Heart left ventricle (tissue), 16 donors: ENCODE measurements at regions of chr2 and their contacts with region 1.

Region 1: GRCh38 chr2:104872866-104873688 is 19.2 kb downstream of the POU3F3 start:
- DNase-seq: peak in 4 of 5 donors; percentile 40 to 49 (median 47)
- ATAC-seq: peak in 3 of 4 donors; percentile 79 to 87 (median 83)
- H3K4me3 ChIP-seq: peak overlapping the region; percentile 12 to 70 (median 54)
- H3K27ac ChIP-seq: no peak overlapping the region
- H3K4me1 ChIP-seq: peaks cover 0 to 22% (median 8%) of the 10 kb centered on the region in 12 donors
- H3K27me3 ChIP-seq: peaks cover 30 to 95% (median 48%) of the 10 kb centered on the region in 9 donors
- CTCF ChIP-seq: peak; percentile 12 to 69 (median 48)
- POLR2A ChIP-seq: no peak

Region 2: GRCh38 chr2:103161456-103162289 is 1711.4 kb before region 1 on chr2:
- intact Hi-C with region 1: loop called in 2 of 10 experiments (anchors 5 to 10 kb)
- DNase-seq: no peak
- ATAC-seq: peak in 3 of 4 donors; percentile 22 to 61 (median 57)
- H3K4me3 ChIP-seq: no peak overlapping the region
- H3K27ac ChIP-seq: no peak overlapping the region
- H3K4me1 ChIP-seq: no peaks in the 10 kb centered on the region
- H3K27me3 ChIP-seq: peaks cover 0 to 11% (median 0%) of the 10 kb centered on the region in 9 donors
- CTCF ChIP-seq: peak; percentile 42 to 72 (median 58)
- POLR2A ChIP-seq: no peak

Region 3: DNA sequence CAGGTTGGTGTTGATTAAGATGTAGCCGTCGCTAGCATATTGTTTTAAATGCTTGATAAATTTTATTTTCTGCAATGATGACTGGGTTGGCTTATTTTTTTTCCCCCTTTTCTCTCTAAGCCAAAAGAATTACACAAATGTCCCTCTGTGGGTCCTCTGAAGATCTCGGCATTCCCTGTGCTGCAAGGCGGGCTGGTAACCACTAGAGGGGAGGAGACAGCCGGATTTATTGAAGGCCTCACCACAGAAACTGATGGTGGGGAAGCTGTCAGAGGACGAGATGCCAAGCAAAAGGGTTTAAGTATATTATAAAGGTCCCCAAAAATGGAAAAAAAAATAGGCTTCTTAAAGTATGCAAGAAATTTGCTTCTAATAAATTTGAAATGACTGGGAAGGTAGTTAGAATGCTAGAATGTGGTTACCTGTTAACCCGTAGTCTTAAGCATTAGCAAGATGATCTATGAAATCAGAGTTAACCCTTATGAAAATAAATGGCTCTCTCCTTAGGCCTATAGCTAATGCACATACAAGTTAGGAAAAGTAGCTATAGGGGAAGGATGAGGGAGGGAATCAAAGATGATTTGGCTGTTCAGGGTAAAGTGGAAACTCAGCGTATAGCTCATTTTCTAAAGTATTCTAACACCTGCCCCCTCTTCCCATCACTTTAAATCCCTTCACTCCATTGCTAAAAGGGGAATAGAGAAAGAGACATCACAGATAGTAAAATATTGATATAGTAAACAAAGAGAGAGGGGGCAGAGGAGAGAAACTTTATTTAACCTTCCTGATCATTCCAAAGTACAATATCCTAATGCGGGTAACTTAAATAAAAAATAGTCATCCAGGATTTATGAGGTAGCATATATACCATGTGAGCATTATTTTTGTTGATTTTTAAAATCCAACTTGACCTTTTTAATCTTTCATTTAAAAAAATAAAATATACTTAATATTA is 913.6 kb before region 1 on chr2:
- intact Hi-C with region 1: loop called in 1 of 10 experiments (anchors 10 kb)
- DNase-seq: peak in 2 of 5 donors; percentile 7 to 19
- ATAC-seq: peak in 1 of 4 donors; percentile 44
- H3K4me3 ChIP-seq: no peak overlapping the region
- H3K27ac ChIP-seq: no peak overlapping the region
- H3K4me1 ChIP-seq: no peaks in the 10 kb centered on the region
- H3K27me3 ChIP-seq: no peaks in the 10 kb centered on the region
- CTCF ChIP-seq: peak in 11 of 12 donors; percentile 20 to 59 (median 40)
- POLR2A ChIP-seq: no peak

Region 4: GRCh38 chr2:104033399-104033798 is 839.7 kb before region 1 on chr2:
- intact Hi-C with region 1: loop called in 1 of 10 experiments (anchors 10 kb)
- DNase-seq: no peak
- ATAC-seq: no peak
- H3K4me3 ChIP-seq: no peak overlapping the region
- H3K27ac ChIP-seq: no peak overlapping the region
- H3K4me1 ChIP-seq: no peaks in the 10 kb centered on the region
- H3K27me3 ChIP-seq: peaks cover 0 to 3% (median 0%) of the 10 kb centered on the region in 9 donors
- CTCF ChIP-seq: peak in 5 of 12 donors; percentile 22 to 44 (median 26)
- POLR2A ChIP-seq: no peak

Region 5: GRCh38 chr2:104254020-104254419 is 619.1 kb before region 1 on chr2:
- intact Hi-C with region 1: loop called in 1 of 10 experiments (anchors 10 kb)
- DNase-seq: no peak
- ATAC-seq: no peak
- H3K4me3 ChIP-seq: no peak overlapping the region
- H3K27ac ChIP-seq: no peak overlapping the region
- H3K4me1 ChIP-seq: no peaks in the 10 kb centered on the region
- H3K27me3 ChIP-seq: no peaks in the 10 kb centered on the region
- CTCF ChIP-seq: no peak
- POLR2A ChIP-seq: no peak

Region 6: GRCh38 chr2:104849618-104850141 is 23.4 kb before region 1 on chr2:
- intact Hi-C with region 1: no loop called
- DNase-seq: peak in 4 of 5 donors; percentile 58 to 67 (median 66)
- ATAC-seq: no peak
- H3K4me3 ChIP-seq: no peak overlapping the region
- H3K27ac ChIP-seq: no peak overlapping the region
- H3K4me1 ChIP-seq: peaks cover 0 to 42% (median 24%) of the 10 kb centered on the region in 12 donors
- H3K27me3 ChIP-seq: peaks cover 64 to 98% (median 93%) of the 10 kb centered on the region in 9 donors
- CTCF ChIP-seq: peak; percentile 60 to 80 (median 72)
- POLR2A ChIP-seq: no peak

Region 7: GRCh38 chr2:105358593-105358992 is 485.5 kb after region 1 on chr2:
- intact Hi-C with region 1: no loop called
- DNase-seq: no peak
- ATAC-seq: peak in 1 of 4 donors; percentile 29
- H3K4me3 ChIP-seq: no peak overlapping the region
- H3K27ac ChIP-seq: peak overlapping the region in 5 of 12 donors; percentile 8 to 44 (median 19)
- H3K4me1 ChIP-seq: peaks cover 0 to 39% (median 2%) of the 10 kb centered on the region in 12 donors
- H3K27me3 ChIP-seq: no peaks in the 10 kb centered on the region
- CTCF ChIP-seq: no peak
- POLR2A ChIP-seq: no peak